Panc1 (cell line): ENCODE measurements at regions of chr16 and their contacts with region 1.

Region 1: GRCh38 chr16:77236063-77236511 is 36.9 kb downstream of the SYCE1L start:
- DNase-seq: peak; percentile 62
- ATAC-seq: peak; percentile 94
- H3K4me3 ChIP-seq: peak overlapping the region in 1 of 2 experiments; percentile 26; a peak in 2 of 4 replicates
- H3K27ac ChIP-seq: peak overlapping the region; percentile 86
- H3K4me1 ChIP-seq: peaks cover 13% of the 10 kb centered on the region
- H3K27me3 ChIP-seq: no peaks in the 10 kb centered on the region
- CTCF ChIP-seq: peak; percentile 96

Region 2: DNA sequence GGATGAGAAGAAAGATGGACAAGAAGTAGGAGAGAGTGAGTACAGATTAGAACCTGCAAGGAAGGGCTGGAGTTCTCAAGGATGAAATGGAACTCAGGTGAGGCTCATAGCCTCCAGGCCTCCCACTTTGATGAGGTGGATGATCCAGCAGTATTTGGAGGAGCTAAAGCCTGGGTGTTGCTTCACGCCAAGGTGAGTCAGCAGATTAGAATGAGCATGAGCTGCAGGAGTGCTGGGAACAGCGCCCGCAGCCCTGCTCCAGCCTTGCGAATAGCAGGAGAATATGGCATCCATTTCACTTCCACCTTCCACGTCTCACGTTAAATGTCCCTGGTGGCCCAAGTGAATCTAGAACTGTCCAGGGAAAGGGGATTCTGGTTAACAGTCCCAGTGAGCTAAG is 1415.4 kb before region 1 on chr16:
- CTCF ChIA-PET with region 1: no interaction called
- POLR2A ChIA-PET with region 1: no interaction called
- in situ Hi-C with region 1: no loop called
- intact Hi-C with region 1: no loop called
- DNase-seq: no peak
- ATAC-seq: no peak
- H3K4me3 ChIP-seq: no peak overlapping the region
- H3K27ac ChIP-seq: no peak overlapping the region
- H3K4me1 ChIP-seq: no peaks in the 10 kb centered on the region
- H3K27me3 ChIP-seq: no peaks in the 10 kb centered on the region
- CTCF ChIP-seq: no peak

Region 3: GRCh38 chr16:77298638-77299360 is 62.7 kb after region 1 on chr16:
- CTCF ChIA-PET with region 1: no interaction called
- POLR2A ChIA-PET with region 1: no interaction called
- in situ Hi-C with region 1: no loop called
- intact Hi-C with region 1: loop called (anchors 2 kb)
- DNase-seq: peak; percentile 87
- ATAC-seq: peak; percentile 97
- H3K4me3 ChIP-seq: peak overlapping the region in 1 of 2 experiments; percentile 11; a peak in 2 of 4 replicates
- H3K27ac ChIP-seq: peak overlapping the region; percentile 98
- H3K4me1 ChIP-seq: peaks cover 27% of the 10 kb centered on the region
- H3K27me3 ChIP-seq: no peaks in the 10 kb centered on the region
- CTCF ChIP-seq: no peak

Region 4: GRCh38 chr16:77437859-77438258 is 201.8 kb after region 1 on chr16:
- CTCF ChIA-PET with region 1: no interaction called
- POLR2A ChIA-PET with region 1: no interaction called
- in situ Hi-C with region 1: no loop called
- intact Hi-C with region 1: loop called (anchors 5 kb)
- DNase-seq: no peak
- ATAC-seq: no peak
- H3K4me3 ChIP-seq: no peak overlapping the region
- H3K27ac ChIP-seq: peak overlapping the region; percentile 66; the same call in 1 of the 2 replicates
- H3K4me1 ChIP-seq: peaks cover 3% of the 10 kb centered on the region; the same call in 1 of the 2 replicates
- H3K27me3 ChIP-seq: no peaks in the 10 kb centered on the region
- CTCF ChIP-seq: peak; percentile 49; the same call in 1 of the 2 replicates

Region 5: DNA sequence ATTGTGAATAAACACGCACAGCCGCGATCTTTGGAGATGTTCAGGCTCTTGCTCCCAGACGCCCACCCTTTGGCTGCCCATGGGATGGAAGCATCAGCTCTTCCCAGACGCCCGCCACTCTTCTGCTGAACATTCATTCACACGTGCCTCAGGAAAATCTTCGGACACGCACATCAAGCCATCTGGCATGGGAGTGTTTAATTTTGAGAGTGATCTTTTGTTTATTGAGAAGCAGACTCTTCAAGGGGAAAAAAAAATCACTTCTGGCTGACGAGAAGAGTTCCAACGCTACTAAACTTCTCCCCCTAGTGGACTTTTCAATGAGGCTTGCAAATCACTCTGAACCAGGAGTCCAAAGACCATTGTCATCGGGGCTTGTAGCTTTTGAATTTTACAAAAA is 424.2 kb after region 1 on chr16:
- CTCF ChIA-PET with region 1: no interaction called
- POLR2A ChIA-PET with region 1: no interaction called
- in situ Hi-C with region 1: no loop called
- intact Hi-C with region 1: loop called (anchors 5 kb)
- DNase-seq: no peak
- ATAC-seq: no peak
- H3K4me3 ChIP-seq: no peak overlapping the region
- H3K27ac ChIP-seq: no peak overlapping the region
- H3K4me1 ChIP-seq: no peaks in the 10 kb centered on the region
- H3K27me3 ChIP-seq: no peaks in the 10 kb centered on the region
- CTCF ChIP-seq: peak; percentile 72

Region 6: GRCh38 chr16:77971306-77972271 is 735.5 kb after region 1 on chr16:
- CTCF ChIA-PET with region 1: no interaction called
- POLR2A ChIA-PET with region 1: no interaction called
- in situ Hi-C with region 1: no loop called
- intact Hi-C with region 1: loop called (anchors 10 kb)
- DNase-seq: peak; percentile 15
- ATAC-seq: peak; percentile 90
- H3K4me3 ChIP-seq: no peak overlapping the region
- H3K27ac ChIP-seq: no peak overlapping the region
- H3K4me1 ChIP-seq: no peaks in the 10 kb centered on the region
- H3K27me3 ChIP-seq: no peaks in the 10 kb centered on the region
- CTCF ChIP-seq: peak; percentile 77